Naive thymus-derived CD4-positive, alpha-beta T cell (primary cell): ENCODE measurements at regions of chr21 and their contacts with region 1.

Region 1: DNA sequence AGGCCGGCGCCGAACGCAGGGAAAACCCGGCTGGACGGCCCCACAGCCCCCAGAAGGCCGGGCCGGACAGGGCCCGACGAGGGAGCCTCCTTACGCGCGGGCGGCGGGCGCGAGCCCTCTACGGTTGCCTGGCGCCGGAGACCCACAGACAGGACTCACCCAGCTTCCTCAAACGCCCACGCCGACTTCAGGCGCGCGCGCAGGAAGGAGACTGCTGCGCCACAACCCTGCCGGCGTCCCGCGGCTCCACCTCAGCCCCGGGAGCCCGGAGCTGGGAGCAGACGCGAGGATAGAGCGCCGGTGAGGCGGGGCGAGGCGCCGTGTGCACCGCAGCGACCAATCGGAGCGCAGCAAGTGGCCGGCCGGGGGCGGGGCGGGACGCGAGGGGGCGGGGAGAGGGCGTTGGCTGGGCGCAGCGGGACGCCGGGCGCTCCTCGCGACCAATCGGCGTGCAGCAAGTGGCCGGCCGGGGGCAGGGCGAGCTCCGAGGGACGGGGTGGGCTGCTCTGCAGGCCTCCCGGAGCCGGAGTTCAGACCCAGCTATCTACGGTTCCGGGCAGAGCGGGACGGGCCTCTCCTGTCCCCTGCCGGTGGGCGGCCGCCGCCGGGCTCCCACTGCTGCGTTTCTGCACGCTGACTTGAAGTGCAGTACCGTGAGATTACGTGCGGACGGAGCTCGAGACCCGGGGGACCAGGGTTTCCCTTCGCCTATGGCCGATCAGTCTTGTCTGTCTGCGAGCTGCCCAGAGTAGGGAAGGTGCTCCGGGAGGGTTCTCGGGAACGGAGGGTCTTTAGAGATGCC is at the start of gene TMEM50B:
- DNase-seq: peak; percentile 85 to 96 (median 94)
- ATAC-seq: peak; percentile 95
- H3K4me3 ChIP-seq: peak within 1 kb of the TSS; percentile 70
- H3K4me3 Mint-ChIP-seq: peak within 1 kb of the TSS; percentile 87 to 96 (median 96)
- H3K27ac ChIP-seq: peak within 1 kb of the TSS; percentile 89
- H3K27ac Mint-ChIP-seq: peak within 1 kb of the TSS; percentile 90 to 99 (median 95)
- H3K4me1 ChIP-seq: peaks cover 0 to 5% of the 10 kb centered on the region in 2 donors
- H3K4me1 Mint-ChIP-seq: peaks cover 7 to 33% (median 21%) of the 10 kb centered on the region in 7 donors
- H3K27me3 ChIP-seq: no peaks in the 10 kb centered on the region
- H3K27me3 Mint-ChIP-seq: peaks cover 0 to 15% (median 0%) of the 10 kb centered on the region in 5 donors
- total RNA-seq, gene TMEM50B: 38.3 to 108 (median 61.7) TPM

Region 2: DNA sequence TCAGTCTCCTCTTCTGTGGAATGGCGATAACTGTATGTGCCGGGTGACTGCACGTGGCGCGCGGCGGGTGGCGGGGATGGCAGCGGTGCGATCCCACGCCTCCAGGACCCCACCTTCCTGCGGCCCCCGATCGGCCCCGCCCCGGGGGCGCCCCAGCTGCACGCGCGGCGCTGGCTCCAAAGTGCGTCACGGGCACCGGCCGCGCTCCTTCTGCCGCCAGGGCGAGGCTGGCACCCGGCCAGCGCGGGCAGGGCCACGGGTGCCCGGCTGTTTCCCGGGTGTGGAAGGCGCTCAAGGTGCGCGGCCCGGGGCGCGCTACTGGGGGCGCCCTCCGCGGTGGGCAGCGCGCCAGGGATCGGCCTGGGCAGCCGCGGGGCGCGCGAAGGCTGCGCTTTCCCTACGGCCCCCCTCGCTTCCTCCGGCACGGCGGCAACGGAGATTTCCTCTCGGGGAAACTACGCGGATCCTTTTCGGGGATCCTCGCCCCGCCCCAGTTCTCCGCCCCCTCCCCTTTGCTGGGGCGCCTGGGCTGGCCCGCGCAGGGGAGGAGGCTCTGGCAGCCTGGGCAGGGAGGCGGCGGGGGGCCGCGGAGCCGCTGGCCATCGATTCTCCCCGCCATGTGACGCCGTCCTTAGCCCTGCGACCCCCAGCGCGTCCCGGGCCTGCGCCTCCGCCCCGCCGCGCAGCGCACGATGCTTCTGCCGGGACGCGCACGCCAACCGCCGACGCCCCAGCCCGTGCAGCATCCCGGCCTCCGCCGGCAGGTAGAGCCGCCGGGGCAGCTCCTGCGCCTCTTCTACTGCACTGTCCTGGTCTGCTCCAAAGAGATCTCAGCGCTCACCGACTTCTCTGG is 1067.5 kb before region 1 on chr21 and contains the start of gene EVA1C:
- CTCF ChIA-PET with region 1: no interaction called
- POLR2A ChIA-PET with region 1: no interaction called
- intact Hi-C with region 1: loop called in 1 of 2 experiments (anchors 5 kb)
- DNase-seq: peak; percentile 56 to 73 (median 70)
- ATAC-seq: peak; percentile 81
- H3K4me3 ChIP-seq: peak within 1 kb of the TSS; percentile 76
- H3K4me3 Mint-ChIP-seq: peak within 1 kb of the TSS; percentile 88 to 97 (median 94)
- H3K27ac ChIP-seq: peak within 1 kb of the TSS; percentile 85
- H3K27ac Mint-ChIP-seq: peak within 1 kb of the TSS; percentile 89 to 95 (median 93)
- H3K4me1 ChIP-seq: peaks cover 14 to 29% of the 10 kb centered on the region in 2 donors
- H3K4me1 Mint-ChIP-seq: peaks cover 22 to 57% (median 28%) of the 10 kb centered on the region in 7 donors
- H3K27me3 ChIP-seq: no peaks in the 10 kb centered on the region
- H3K27me3 Mint-ChIP-seq: peaks cover 0 to 7% (median 0%) of the 10 kb centered on the region in 5 donors
- total RNA-seq, gene EVA1C: 2.6 to 16.3 (median 12.3) TPM

Region 3: GRCh38 chr21:33403779-33404585 is 75.9 kb before region 1 on chr21:
- CTCF ChIA-PET with region 1: no interaction called
- POLR2A ChIA-PET with region 1: no interaction called
- intact Hi-C with region 1: loop called in 1 of 2 experiments (anchors 5 kb)
- DNase-seq: peak in 7 of 9 donors; percentile 21 to 43 (median 29)
- ATAC-seq: peak; percentile 30
- H3K4me3 ChIP-seq: peak overlapping the region; percentile 77
- H3K4me3 Mint-ChIP-seq: peak overlapping the region; percentile 87 to 99 (median 97)
- H3K27ac ChIP-seq: peak overlapping the region; percentile 84
- H3K27ac Mint-ChIP-seq: peak overlapping the region; percentile 4 to 98 (median 94)
- H3K4me1 ChIP-seq: peaks cover 16 to 25% of the 10 kb centered on the region in 2 donors
- H3K4me1 Mint-ChIP-seq: peaks cover 25 to 60% (median 54%) of the 10 kb centered on the region in 7 donors
- H3K27me3 ChIP-seq: no peaks in the 10 kb centered on the region
- H3K27me3 Mint-ChIP-seq: peaks cover 0 to 63% (median 0%) of the 10 kb centered on the region in 5 donors

Region 4: DNA sequence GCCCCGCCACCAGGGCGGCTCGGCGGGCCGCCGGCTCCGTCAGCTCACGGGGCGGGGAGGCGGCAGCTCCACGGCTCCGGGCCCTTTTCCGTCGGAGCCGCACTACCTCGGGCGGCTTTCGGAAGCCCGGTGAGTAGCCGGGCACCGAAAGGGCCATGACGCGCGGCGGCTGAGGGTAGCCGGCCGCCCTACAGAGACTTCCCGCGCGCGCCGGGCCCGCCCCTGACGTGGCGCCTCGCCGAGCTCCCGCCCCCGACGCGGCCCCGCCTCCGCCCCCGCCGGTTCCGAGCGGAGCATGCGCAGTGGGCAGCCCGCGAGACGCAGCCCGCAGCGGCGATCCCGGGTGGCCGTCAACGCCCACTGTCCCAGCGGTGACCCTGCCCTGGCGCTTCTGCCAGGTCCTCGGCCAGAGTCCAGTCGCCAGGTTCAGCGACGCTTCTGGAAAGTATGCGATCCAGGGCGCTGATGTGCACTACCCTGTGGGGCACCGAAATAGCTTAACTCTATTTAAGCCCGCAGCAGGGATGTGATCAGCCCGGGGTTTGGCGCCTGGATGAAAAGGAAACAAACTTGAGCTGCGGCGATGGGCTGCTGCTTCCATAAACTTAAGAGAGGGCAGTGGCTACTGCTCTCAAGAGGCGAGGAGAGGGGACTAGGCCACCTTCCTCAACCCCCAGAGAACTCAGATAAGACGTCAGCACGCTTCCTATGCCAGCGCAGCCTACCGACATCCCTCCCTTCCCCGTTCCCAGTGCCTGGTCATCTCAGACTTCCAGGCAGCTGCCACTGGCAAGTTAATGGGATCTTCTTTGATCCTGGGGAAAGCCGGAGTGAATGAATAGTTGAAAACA is 108.8 kb after region 1 on chr21 and contains the start of gene DONSON:
- CTCF ChIA-PET with region 1: no interaction called
- POLR2A ChIA-PET with region 1: interaction called, 11 read pairs
- intact Hi-C with region 1: loop called (anchors 1 kb)
- DNase-seq: peak; percentile 76 to 97 (median 89)
- ATAC-seq: peak; percentile 98
- H3K4me3 ChIP-seq: peak within 1 kb of the TSS; percentile 63
- H3K4me3 Mint-ChIP-seq: peak within 1 kb of the TSS; percentile 90 to 96 (median 94)
- H3K27ac ChIP-seq: peak within 1 kb of the TSS; percentile 89
- H3K27ac Mint-ChIP-seq: peak within 1 kb of the TSS; percentile 34 to 96 (median 89)
- H3K4me1 ChIP-seq: peaks cover 5% of the 10 kb centered on the region in 2 donors
- H3K4me1 Mint-ChIP-seq: peaks cover 0 to 31% (median 20%) of the 10 kb centered on the region in 7 donors
- H3K27me3 ChIP-seq: no peaks in the 10 kb centered on the region
- H3K27me3 Mint-ChIP-seq: peaks cover 0 to 1% (median 0%) of the 10 kb centered on the region in 5 donors
- total RNA-seq, gene DONSON: 8.9 to 30.8 (median 10.7) TPM

Region 5: GRCh38 chr21:33751120-33751519 is 271.2 kb after region 1 on chr21:
- CTCF ChIA-PET with region 1: no interaction called
- POLR2A ChIA-PET with region 1: no interaction called
- intact Hi-C with region 1: no loop called
- DNase-seq: no peak
- ATAC-seq: no peak
- H3K4me3 ChIP-seq: no peak overlapping the region
- H3K4me3 Mint-ChIP-seq: no peak overlapping the region
- H3K27ac ChIP-seq: no peak overlapping the region
- H3K27ac Mint-ChIP-seq: no peak overlapping the region
- H3K4me1 ChIP-seq: no peaks in the 10 kb centered on the region
- H3K4me1 Mint-ChIP-seq: no peaks in the 10 kb centered on the region
- H3K27me3 ChIP-seq: no peaks in the 10 kb centered on the region
- H3K27me3 Mint-ChIP-seq: no peaks in the 10 kb centered on the region